Prostate gland (tissue), 2 donors: ENCODE measurements at regions of chr12 and their contacts with region 1.

Region 1: GRCh38 chr12:26832822-26833742 is at the start of gene ITPR2:
- DNase-seq: peak; percentile 94
- H3K4me3 ChIP-seq: peak within 1 kb of the TSS; percentile 77 to 88
- H3K27ac ChIP-seq: peak within 1 kb of the TSS; percentile 81 to 92
- H3K4me1 ChIP-seq: no peaks in the 10 kb centered on the region
- H3K27me3 ChIP-seq: no peaks in the 10 kb centered on the region
- CTCF ChIP-seq: peak; percentile 16 to 46 (median 33)
- POLR2A ChIP-seq: peak; percentile 97
- total RNA-seq, gene ITPR2: 30.0 to 44.4 TPM

Region 2: DNA sequence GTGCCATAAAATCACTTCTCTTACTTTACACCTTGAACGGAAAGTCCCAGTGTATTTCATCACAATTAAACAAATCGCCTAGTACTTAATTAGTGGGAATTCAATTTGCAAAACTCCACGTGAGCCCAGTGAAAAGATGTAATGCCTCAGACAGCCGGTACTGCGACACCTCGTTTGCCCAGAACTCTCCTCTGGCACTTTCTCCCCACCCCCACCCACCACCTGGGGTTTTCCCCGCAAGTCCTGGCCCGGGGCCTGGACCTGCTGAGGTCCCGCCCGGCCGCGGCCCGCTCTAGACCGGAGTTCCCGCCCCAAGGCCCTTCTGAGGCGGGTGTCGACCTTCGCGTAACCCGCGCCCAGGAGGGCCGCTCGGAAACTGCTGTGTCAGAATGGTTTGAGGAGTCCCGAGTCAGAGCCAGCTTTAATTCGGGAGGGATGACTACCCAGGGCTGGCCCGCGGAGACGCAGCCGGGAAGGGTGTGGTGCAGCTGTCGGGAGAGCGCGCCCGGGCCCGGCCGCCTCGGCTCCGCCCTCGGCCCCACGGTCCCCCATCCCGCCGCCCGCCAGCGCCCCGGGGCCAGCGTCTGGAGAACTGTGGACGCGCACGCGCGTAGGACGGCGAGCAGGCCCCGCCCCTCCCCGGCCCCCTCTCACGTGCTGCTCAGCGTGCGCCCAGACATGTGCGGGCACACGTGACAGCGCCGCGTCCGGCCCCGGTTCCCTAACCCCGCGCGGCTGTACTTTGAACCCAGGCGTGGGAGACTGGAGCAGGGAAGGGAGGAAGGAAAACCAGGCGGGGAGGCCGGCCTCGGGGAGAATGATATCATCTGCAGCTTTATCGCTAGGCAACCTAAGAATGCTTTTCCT is 719.0 kb before region 1 on chr12:
- intact Hi-C with region 1: loop called (anchors 10 kb)
- DNase-seq: peak; percentile 88
- H3K4me3 ChIP-seq: peak overlapping the region; percentile 46 to 48
- H3K27ac ChIP-seq: peak overlapping the region; percentile 88 to 92
- H3K4me1 ChIP-seq: no peaks in the 10 kb centered on the region
- H3K27me3 ChIP-seq: no peaks in the 10 kb centered on the region
- CTCF ChIP-seq: peak in 2 of 4 experiments; percentile 47
- POLR2A ChIP-seq: peak; percentile 85

Region 3: GRCh38 chr12:26884765-26885576 is 51.9 kb after region 1 on chr12:
- intact Hi-C with region 1: loop called (anchors 10 kb)
- DNase-seq: peak; percentile 89
- H3K4me3 ChIP-seq: no peak overlapping the region
- H3K27ac ChIP-seq: no peak overlapping the region
- H3K4me1 ChIP-seq: no peaks in the 10 kb centered on the region
- H3K27me3 ChIP-seq: no peaks in the 10 kb centered on the region
- CTCF ChIP-seq: peak; percentile 94 to 97 (median 96)
- POLR2A ChIP-seq: no peak

Region 4: GRCh38 chr12:27083861-27084394 is 250.8 kb after region 1 on chr12:
- intact Hi-C with region 1: no loop called
- DNase-seq: no peak
- H3K4me3 ChIP-seq: no peak overlapping the region
- H3K27ac ChIP-seq: no peak overlapping the region
- H3K4me1 ChIP-seq: no peaks in the 10 kb centered on the region
- H3K27me3 ChIP-seq: no peaks in the 10 kb centered on the region
- CTCF ChIP-seq: no peak
- POLR2A ChIP-seq: no peak